Naive thymus-derived CD4-positive, alpha-beta T cell (primary cell): ENCODE measurements at regions of chr17 and their contacts with region 1.

Region 1: GRCh38 chr17:40062329-40063186 is at the start of gene THRA:
- DNase-seq: peak; percentile 56 to 77 (median 71)
- ATAC-seq: peak; percentile 93
- H3K4me3 ChIP-seq: peak within 1 kb of the TSS; percentile 81
- H3K4me3 Mint-ChIP-seq: peak within 1 kb of the TSS; percentile 86 to 97 (median 94)
- H3K27ac ChIP-seq: peak within 1 kb of the TSS; percentile 84
- H3K27ac Mint-ChIP-seq: peak within 1 kb of the TSS; percentile 35 to 95 (median 89)
- H3K4me1 ChIP-seq: peaks cover 21 to 34% of the 10 kb centered on the region in 2 donors
- H3K4me1 Mint-ChIP-seq: peaks cover 32 to 50% (median 43%) of the 10 kb centered on the region in 7 donors
- H3K27me3 ChIP-seq: no peaks in the 10 kb centered on the region
- H3K27me3 Mint-ChIP-seq: peaks cover 0 to 62% (median 0%) of the 10 kb centered on the region in 5 donors
- total RNA-seq, gene THRA: 3.2 to 55.9 (median 48.4) TPM

Region 2: DNA sequence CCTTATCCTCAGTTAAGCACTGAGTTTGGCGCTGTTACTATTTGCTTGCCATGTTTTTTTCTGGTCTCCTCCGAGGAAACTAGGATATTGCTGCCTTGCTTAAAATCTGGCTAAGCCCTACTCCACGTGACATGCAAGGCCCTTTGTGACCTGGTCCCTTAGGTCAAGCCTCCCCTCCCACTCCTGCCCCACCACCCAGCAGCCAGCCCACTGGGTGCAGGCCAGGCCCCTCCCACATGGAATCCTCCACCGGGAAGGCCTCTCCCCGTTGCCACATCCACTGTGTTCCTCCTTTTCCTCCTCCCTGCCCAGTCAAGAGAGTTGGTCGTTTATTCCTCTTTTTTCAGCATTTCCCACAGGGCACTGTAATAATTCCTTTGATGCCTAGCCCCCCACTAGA is 65.8 kb before region 1 on chr17:
- CTCF ChIA-PET with region 1: no interaction called
- POLR2A ChIA-PET with region 1: no interaction called
- intact Hi-C with region 1: no loop called
- DNase-seq: no peak
- ATAC-seq: no peak
- H3K4me3 ChIP-seq: no peak overlapping the region
- H3K4me3 Mint-ChIP-seq: no peak overlapping the region
- H3K27ac ChIP-seq: no peak overlapping the region
- H3K27ac Mint-ChIP-seq: peak overlapping the region in 2 of 9 donors; percentile 42 to 48
- H3K4me1 ChIP-seq: no peaks in the 10 kb centered on the region
- H3K4me1 Mint-ChIP-seq: peaks cover 0 to 19% (median 0%) of the 10 kb centered on the region in 7 donors
- H3K27me3 ChIP-seq: no peaks in the 10 kb centered on the region
- H3K27me3 Mint-ChIP-seq: no peaks in the 10 kb centered on the region

Region 3: DNA sequence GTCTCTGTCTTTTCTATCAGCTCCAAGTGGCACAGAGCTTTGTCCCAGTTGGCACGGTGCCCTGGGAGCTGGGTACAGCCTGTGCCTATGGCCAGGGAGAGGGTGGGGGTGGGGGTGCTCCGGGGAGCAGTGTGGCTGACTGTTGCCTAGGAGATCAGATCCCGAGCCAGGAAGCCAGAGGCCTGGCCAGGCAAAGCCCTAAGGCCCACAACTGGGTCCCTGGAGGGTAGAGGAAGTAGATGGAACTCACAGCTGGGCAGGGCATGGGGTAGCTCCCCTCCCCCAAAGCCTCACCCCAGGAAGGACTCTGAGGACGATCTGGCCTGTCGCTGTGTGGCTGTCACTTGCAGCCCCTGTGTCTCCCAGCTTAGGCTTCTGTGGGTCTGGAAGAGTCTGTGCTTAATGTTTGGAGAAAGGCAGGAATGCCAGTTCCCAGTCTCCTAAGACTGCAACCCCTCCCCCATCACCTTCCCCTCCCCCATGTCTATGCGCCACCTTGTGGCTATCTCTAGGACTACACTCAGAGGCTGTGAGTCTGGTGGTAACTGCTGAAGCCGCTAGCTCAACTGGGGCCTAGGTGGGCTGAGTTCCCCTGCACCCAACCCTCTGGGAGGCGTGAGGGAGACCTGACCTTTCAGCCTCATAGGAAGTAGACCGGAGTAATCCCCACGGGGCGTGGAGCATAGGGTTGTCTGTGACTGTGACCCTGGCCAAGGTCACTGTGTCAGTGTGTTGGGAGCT is 12.8 kb after region 1 on chr17:
- CTCF ChIA-PET with region 1: interaction called, 106 read pairs
- POLR2A ChIA-PET with region 1: interaction called, 60 read pairs
- intact Hi-C with region 1: loop called in 1 of 2 experiments (anchors 1 kb)
- DNase-seq: peak; percentile 45 to 80 (median 63)
- ATAC-seq: peak; percentile 93
- H3K4me3 ChIP-seq: no peak overlapping the region
- H3K4me3 Mint-ChIP-seq: peak overlapping the region in 8 of 10 donors; percentile 35 to 78 (median 71)
- H3K27ac ChIP-seq: peak overlapping the region; percentile 18
- H3K27ac Mint-ChIP-seq: peak overlapping the region in 8 of 9 donors; percentile 42 to 89 (median 68)
- H3K4me1 ChIP-seq: peaks cover 13 to 36% of the 10 kb centered on the region in 2 donors
- H3K4me1 Mint-ChIP-seq: peaks cover 7 to 67% (median 36%) of the 10 kb centered on the region in 7 donors
- H3K27me3 ChIP-seq: no peaks in the 10 kb centered on the region
- H3K27me3 Mint-ChIP-seq: no peaks in the 10 kb centered on the region

Region 4: GRCh38 chr17:40086150-40087044 is 23.8 kb after region 1 on chr17:
- CTCF ChIA-PET with region 1: interaction called, 19 read pairs
- POLR2A ChIA-PET with region 1: interaction called, 6 read pairs
- intact Hi-C with region 1: loop called in 1 of 2 experiments (anchors 1 kb)
- DNase-seq: peak in 6 of 9 donors; percentile 56 to 69 (median 61)
- ATAC-seq: peak; percentile 76
- H3K4me3 ChIP-seq: no peak overlapping the region
- H3K4me3 Mint-ChIP-seq: peak overlapping the region in 1 of 10 donors; percentile 38
- H3K27ac ChIP-seq: no peak overlapping the region
- H3K27ac Mint-ChIP-seq: peak overlapping the region in 8 of 9 donors; percentile 9 to 70 (median 47)
- H3K4me1 ChIP-seq: peaks cover 0 to 4% of the 10 kb centered on the region in 2 donors
- H3K4me1 Mint-ChIP-seq: peaks cover 4 to 35% (median 21%) of the 10 kb centered on the region in 7 donors
- H3K27me3 ChIP-seq: no peaks in the 10 kb centered on the region
- H3K27me3 Mint-ChIP-seq: no peaks in the 10 kb centered on the region

Region 5: DNA sequence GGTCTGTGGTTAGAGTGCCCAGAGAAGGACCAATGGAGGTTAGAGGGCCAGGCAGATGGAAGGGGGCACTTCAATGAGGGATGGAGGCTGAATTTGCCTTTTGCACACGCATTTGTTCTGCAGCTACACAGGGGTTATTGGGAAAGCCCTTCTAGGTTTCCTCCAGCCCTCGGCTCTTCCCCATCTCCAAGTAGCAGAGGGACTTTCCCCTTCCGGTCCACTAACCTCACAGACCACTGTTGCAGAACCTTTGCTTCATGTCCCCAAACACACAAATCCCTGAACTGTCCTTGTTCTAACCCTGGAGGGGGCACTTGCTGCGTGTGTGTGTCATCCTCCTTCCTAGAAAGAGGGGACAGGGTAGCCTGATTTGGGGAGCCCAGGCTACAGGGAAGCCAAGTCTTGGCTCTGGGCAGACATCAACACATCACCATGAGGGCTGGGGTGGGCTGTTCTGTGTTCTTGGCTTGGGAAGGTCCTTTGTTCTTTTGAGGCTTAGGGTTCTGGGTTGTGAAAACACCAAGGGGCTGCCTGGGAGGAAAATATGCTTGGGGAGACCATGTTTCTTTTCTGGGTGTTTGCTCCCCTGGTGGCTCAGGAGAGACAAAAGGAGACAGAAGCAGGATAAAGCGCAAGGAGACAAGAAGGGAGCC is 45.1 kb after region 1 on chr17:
- CTCF ChIA-PET with region 1: interaction called, 127 read pairs
- POLR2A ChIA-PET with region 1: interaction called, 60 read pairs
- intact Hi-C with region 1: loop called (anchors 1 to 2 kb)
- DNase-seq: peak in 3 of 9 donors; percentile 17 to 51 (median 25)
- ATAC-seq: peak; percentile 3
- H3K4me3 ChIP-seq: peak overlapping the region; percentile 3
- H3K4me3 Mint-ChIP-seq: peak overlapping the region; percentile 50 to 88 (median 76)
- H3K27ac ChIP-seq: peak overlapping the region; percentile 87
- H3K27ac Mint-ChIP-seq: peak overlapping the region; percentile 82 to 100 (median 99)
- H3K4me1 ChIP-seq: peaks cover 92 to 98% of the 10 kb centered on the region in 2 donors
- H3K4me1 Mint-ChIP-seq: peaks cover 84 to 99% (median 95%) of the 10 kb centered on the region in 7 donors
- H3K27me3 ChIP-seq: no peaks in the 10 kb centered on the region
- H3K27me3 Mint-ChIP-seq: peaks cover 0 to 24% (median 0%) of the 10 kb centered on the region in 5 donors

Region 6: GRCh38 chr17:40180694-40181093 is 118.1 kb after region 1 on chr17:
- CTCF ChIA-PET with region 1: no interaction called
- POLR2A ChIA-PET with region 1: no interaction called
- intact Hi-C with region 1: no loop called
- DNase-seq: no peak
- ATAC-seq: no peak
- H3K4me3 ChIP-seq: no peak overlapping the region
- H3K4me3 Mint-ChIP-seq: no peak overlapping the region
- H3K27ac ChIP-seq: no peak overlapping the region
- H3K27ac Mint-ChIP-seq: no peak overlapping the region
- H3K4me1 ChIP-seq: peaks cover 5% of the 10 kb centered on the region in 2 donors
- H3K4me1 Mint-ChIP-seq: peaks cover 6 to 12% (median 9%) of the 10 kb centered on the region in 7 donors
- H3K27me3 ChIP-seq: no peaks in the 10 kb centered on the region
- H3K27me3 Mint-ChIP-seq: no peaks in the 10 kb centered on the region

Region 7: DNA sequence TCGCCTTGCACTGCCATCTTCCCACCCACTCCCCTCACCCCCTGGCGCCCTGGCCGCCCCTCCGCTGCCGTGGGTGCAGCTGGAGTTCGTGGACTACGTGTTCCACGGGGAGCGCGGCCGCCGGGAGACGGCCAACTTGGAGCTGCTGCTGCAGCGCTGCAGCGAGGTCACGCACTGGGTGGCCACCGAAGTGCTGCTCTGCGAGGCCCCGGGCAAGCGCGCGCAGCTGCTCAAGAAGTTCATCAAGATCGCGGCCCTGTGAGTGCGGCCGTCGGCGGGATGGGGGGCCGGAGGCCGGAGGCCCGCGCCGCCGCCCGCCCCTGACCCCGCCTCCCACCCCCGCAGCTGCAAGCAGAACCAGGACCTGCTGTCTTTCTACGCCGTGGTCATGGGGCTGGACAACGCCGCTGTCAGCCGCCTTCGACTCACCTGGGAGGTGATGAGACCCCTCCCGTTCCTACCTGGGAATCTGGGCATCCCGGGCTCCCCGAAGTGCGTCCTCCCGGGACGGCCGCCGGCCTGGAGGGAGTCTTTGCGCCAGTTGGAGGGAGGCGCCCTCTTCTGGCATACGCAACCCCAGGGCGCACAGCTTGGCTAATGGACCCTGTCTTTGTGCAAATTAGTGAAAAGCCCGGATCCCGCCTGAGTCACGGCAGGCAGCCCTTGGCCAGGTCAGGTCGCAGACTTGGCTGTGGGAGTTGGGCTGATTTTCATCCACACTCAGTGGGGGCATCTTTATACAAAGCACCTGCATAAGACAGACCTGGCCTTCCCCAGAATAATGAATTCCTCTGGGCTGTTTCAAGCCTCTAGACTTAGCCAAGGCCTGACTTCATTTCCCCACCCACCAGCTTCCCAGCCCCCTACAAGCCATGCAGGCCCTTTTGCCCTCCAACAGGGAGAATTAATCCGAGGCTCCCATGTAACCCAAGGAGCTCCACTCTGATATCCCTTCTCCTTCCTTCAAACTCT is 129.0 kb after region 1 on chr17:
- CTCF ChIA-PET with region 1: interaction called, 3 read pairs
- POLR2A ChIA-PET with region 1: no interaction called
- intact Hi-C with region 1: loop called in 1 of 2 experiments (anchors 1 kb)
- DNase-seq: peak; percentile 36 to 73 (median 52)
- ATAC-seq: peak; percentile 92
- H3K4me3 ChIP-seq: peak overlapping the region; percentile 63
- H3K4me3 Mint-ChIP-seq: peak overlapping the region; percentile 88 to 97 (median 94)
- H3K27ac ChIP-seq: peak overlapping the region; percentile 29
- H3K27ac Mint-ChIP-seq: peak overlapping the region in 4 of 9 donors; percentile 22 to 58 (median 36)
- H3K4me1 ChIP-seq: peaks cover 0 to 3% of the 10 kb centered on the region in 2 donors
- H3K4me1 Mint-ChIP-seq: peaks cover 0 to 27% (median 13%) of the 10 kb centered on the region in 7 donors
- H3K27me3 ChIP-seq: no peaks in the 10 kb centered on the region
- H3K27me3 Mint-ChIP-seq: peaks cover 0 to 4% (median 0%) of the 10 kb centered on the region in 5 donors